ENCODE measurements at regions of chr12 and their contacts with region 1.

Region 1: DNA sequence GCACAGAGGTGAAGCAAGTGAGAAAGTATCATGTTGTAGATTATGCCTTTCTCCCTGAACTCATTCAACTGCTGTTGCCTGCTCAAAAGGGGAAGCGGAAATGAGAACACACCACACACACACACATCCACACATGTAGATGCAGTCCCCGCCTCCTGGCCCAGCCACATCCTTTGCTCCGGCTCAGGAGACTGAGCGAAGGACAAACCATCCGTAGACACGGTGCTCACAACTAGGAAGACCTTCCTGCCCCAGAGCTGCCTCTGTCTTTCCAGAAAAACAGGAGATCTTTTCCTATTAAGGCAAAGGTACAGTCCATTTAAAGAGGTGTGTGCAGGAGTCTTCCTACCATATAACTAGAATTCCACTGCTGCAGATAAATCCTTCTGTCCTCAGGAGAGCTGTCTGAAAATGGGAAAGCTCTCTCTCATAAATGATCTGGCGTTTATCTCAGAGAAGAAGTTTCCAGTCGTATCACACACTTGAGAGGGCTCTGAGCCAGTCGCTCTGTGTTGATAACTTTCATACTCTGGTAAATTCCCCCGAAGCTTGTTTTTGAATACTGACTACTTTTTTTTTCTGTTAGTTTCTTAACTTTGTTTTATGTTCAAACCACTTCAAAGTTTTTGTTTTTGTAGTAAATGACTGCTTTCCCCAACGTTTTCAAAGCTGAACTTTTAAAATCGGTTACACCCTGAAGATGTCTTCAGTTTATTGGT is at the start of gene TESPA1:
- DNase-seq: peak; percentile 69 to 92 (median 86)
- H3K4me3 ChIP-seq: peak within 1 kb of the TSS; percentile 80
- H3K4me3 Mint-ChIP-seq: peak within 1 kb of the TSS; percentile 90 to 94 (median 91)
- H3K27ac ChIP-seq: peak within 1 kb of the TSS; percentile 79
- H3K27ac Mint-ChIP-seq: peak within 1 kb of the TSS; percentile 97 to 99 (median 97)
- H3K4me1 ChIP-seq: peaks cover 82% of the 10 kb centered on the region
- H3K4me1 Mint-ChIP-seq: peaks cover 81 to 95% (median 93%) of the 10 kb centered on the region in 3 donors
- H3K27me3 ChIP-seq: no peaks in the 10 kb centered on the region
- H3K27me3 Mint-ChIP-seq: no peaks in the 10 kb centered on the region
- total RNA-seq, gene TESPA1: 77.3 to 80.6 TPM

Region 2: DNA sequence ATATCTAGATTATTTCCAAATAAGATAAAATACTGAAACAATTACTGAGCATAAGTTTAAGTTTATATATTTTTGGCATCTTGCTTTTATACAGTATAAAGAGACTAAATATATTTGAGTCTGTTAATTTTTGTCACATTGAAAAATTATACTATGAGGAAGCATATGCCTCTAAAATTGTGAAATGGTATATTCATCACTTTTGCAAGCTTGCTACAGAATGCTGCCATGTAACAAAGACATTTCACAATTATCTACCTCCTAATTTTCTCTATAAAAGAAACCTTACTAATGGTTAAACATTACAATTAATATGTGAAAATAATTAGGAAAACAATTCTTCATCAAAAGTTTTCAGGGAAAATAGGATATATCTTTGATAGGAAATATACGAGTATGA is 153.2 kb before region 1 on chr12:
- CTCF ChIA-PET with region 1: no interaction called
- POLR2A ChIA-PET with region 1: no interaction called
- DNase-seq: no peak
- H3K4me3 ChIP-seq: no peak overlapping the region
- H3K4me3 Mint-ChIP-seq: no peak overlapping the region
- H3K27ac ChIP-seq: no peak overlapping the region
- H3K27ac Mint-ChIP-seq: no peak overlapping the region
- H3K4me1 ChIP-seq: no peaks in the 10 kb centered on the region
- H3K4me1 Mint-ChIP-seq: no peaks in the 10 kb centered on the region
- H3K27me3 ChIP-seq: no peaks in the 10 kb centered on the region
- H3K27me3 Mint-ChIP-seq: peaks cover 23 to 34% of the 10 kb centered on the region in 2 donors

Region 3: GRCh38 chr12:55001198-55001868 is 16.5 kb after region 1 on chr12:
- CTCF ChIA-PET with region 1: interaction called, 16 read pairs
- POLR2A ChIA-PET with region 1: no interaction called
- DNase-seq: no peak
- H3K4me3 ChIP-seq: no peak overlapping the region
- H3K4me3 Mint-ChIP-seq: no peak overlapping the region
- H3K27ac ChIP-seq: no peak overlapping the region
- H3K27ac Mint-ChIP-seq: peak overlapping the region in 2 of 8 donors; percentile 10 to 32
- H3K4me1 ChIP-seq: peaks cover 13% of the 10 kb centered on the region
- H3K4me1 Mint-ChIP-seq: peaks cover 4 to 6% (median 6%) of the 10 kb centered on the region in 3 donors
- H3K27me3 ChIP-seq: no peaks in the 10 kb centered on the region
- H3K27me3 Mint-ChIP-seq: peaks cover 0 to 5% of the 10 kb centered on the region in 2 donors

Region 4: DNA sequence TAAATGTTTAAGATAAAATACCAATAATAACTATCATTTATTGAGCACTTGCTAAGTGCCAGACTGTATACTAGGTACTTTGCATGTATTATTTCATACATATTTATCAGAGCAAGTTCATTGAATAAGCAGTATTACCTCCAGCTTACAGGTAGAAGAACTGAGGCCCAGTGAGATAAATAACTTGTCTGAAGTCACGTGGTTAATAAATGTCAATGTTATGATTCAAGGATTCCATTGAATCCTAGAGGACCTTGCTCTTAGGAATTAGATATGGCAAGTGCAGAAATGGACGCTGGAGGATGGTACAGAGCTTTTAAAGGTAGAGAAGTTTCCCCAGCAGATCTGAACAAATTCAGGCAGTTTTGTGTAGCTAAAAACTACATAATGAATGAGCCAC is 31.1 kb after region 1 on chr12:
- CTCF ChIA-PET with region 1: no interaction called
- POLR2A ChIA-PET with region 1: no interaction called
- DNase-seq: no peak
- H3K4me3 ChIP-seq: no peak overlapping the region
- H3K4me3 Mint-ChIP-seq: no peak overlapping the region
- H3K27ac ChIP-seq: no peak overlapping the region
- H3K27ac Mint-ChIP-seq: no peak overlapping the region
- H3K4me1 ChIP-seq: no peaks in the 10 kb centered on the region
- H3K4me1 Mint-ChIP-seq: peaks cover 6 to 9% (median 6%) of the 10 kb centered on the region in 3 donors
- H3K27me3 ChIP-seq: peaks cover 5% of the 10 kb centered on the region
- H3K27me3 Mint-ChIP-seq: peaks cover 25 to 66% of the 10 kb centered on the region in 2 donors